Activated T-helper 1 cell treated with anti-CD3 and anti-CD28 coated beads, Interleukin-12 subunit alpha, Interleukin-12 subunit beta, Interleukin-2, Interleukin-4 antibody, amounts not matched to agents 30 ng/mL and 10 ng/mL and 1 ng/mL, durations not matched to agents 14 hours and 24 hours and 36 hours (primary cell): ENCODE measurements at regions of chr9 and their contacts with region 1.

Region 1: GRCh38 chr9:93003552-93004407 is 54.7 kb upstream of the SUSD3 start:
- DNase-seq: peak; percentile 51
- H3K4me3 Mint-ChIP-seq: no peak overlapping the region
- H3K27ac Mint-ChIP-seq: peak overlapping the region; percentile 63
- H3K4me1 Mint-ChIP-seq: peaks cover 38% of the 10 kb centered on the region
- H3K27me3 Mint-ChIP-seq: no peaks in the 10 kb centered on the region

Region 2: GRCh38 chr9:92747459-92748232 is 256.1 kb before region 1 on chr9:
- intact Hi-C with region 1: no loop called
- DNase-seq: no peak
- H3K4me3 Mint-ChIP-seq: no peak overlapping the region
- H3K27ac Mint-ChIP-seq: no peak overlapping the region
- H3K4me1 Mint-ChIP-seq: peaks cover 31% of the 10 kb centered on the region
- H3K27me3 Mint-ChIP-seq: no peaks in the 10 kb centered on the region

Region 3: GRCh38 chr9:92954049-92954861 is 49.5 kb before region 1 on chr9:
- intact Hi-C with region 1: loop called (anchors 1 kb)
- DNase-seq: peak; percentile 73
- H3K4me3 Mint-ChIP-seq: peak overlapping the region; percentile 49
- H3K27ac Mint-ChIP-seq: peak overlapping the region; percentile 88
- H3K4me1 Mint-ChIP-seq: peaks cover 56% of the 10 kb centered on the region
- H3K27me3 Mint-ChIP-seq: peaks cover 4% of the 10 kb centered on the region

Region 4: DNA sequence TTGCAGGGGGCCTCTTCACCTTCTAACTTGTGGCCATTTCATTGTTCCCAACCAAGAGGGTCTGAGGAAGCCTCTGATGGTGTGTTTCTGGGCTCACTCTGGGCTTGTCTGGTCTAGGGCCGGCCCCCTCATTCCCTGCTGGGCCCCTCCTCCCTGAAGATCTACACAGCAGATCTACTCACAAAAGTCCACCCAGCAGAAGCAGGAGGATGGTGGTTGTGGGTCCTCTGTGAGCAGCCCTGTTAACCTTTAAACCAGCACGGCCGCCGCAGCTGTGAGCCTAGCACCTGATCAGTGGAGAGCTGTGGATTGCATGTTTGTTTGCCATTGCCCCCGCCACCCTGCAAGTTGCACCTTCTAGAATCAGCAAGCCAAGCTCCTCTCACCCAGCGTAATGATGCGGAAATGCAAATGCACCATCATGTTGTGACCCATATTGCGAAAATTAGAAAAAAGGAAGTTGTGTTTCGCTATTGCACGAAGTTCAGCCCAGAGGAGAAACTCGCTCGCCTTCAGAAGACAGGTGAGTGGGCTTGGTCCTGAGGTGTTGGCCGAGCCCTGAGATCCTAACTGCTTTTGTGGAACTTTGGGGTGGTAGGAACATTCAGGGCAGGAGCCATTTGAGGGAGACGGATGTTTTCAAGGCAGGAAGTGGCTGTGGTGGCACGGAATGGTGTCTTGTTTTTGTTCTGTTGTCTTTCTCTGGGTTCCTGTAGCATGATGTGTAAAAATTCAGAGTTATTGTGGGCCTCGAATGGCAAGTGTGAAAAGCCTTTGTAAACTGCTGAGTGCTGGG is 39.8 kb before region 1 on chr9:
- intact Hi-C with region 1: loop called (anchors 2 kb)
- DNase-seq: peak; percentile 77
- H3K4me3 Mint-ChIP-seq: peak overlapping the region; percentile 98
- H3K27ac Mint-ChIP-seq: peak overlapping the region; percentile 97
- H3K4me1 Mint-ChIP-seq: peaks cover 69% of the 10 kb centered on the region
- H3K27me3 Mint-ChIP-seq: no peaks in the 10 kb centered on the region

Region 5: GRCh38 chr9:92977026-92977678 is 26.6 kb before region 1 on chr9:
- intact Hi-C with region 1: no loop called
- DNase-seq: no peak
- H3K4me3 Mint-ChIP-seq: no peak overlapping the region
- H3K27ac Mint-ChIP-seq: peak overlapping the region; percentile 45
- H3K4me1 Mint-ChIP-seq: peaks cover 72% of the 10 kb centered on the region
- H3K27me3 Mint-ChIP-seq: no peaks in the 10 kb centered on the region

Region 6: GRCh38 chr9:92988215-92988819 is 15.5 kb before region 1 on chr9:
- intact Hi-C with region 1: loop called (anchors 2 kb)
- DNase-seq: no peak
- H3K4me3 Mint-ChIP-seq: peak overlapping the region; percentile 12
- H3K27ac Mint-ChIP-seq: peak overlapping the region; percentile 73
- H3K4me1 Mint-ChIP-seq: peaks cover 74% of the 10 kb centered on the region
- H3K27me3 Mint-ChIP-seq: no peaks in the 10 kb centered on the region

Region 7: GRCh38 chr9:93041108-93041802 is 37.5 kb after region 1 on chr9:
- intact Hi-C with region 1: loop called (anchors 5 kb)
- DNase-seq: no peak
- H3K4me3 Mint-ChIP-seq: no peak overlapping the region
- H3K27ac Mint-ChIP-seq: peak overlapping the region; percentile 37
- H3K4me1 Mint-ChIP-seq: peaks cover 26% of the 10 kb centered on the region
- H3K27me3 Mint-ChIP-seq: peaks cover 2% of the 10 kb centered on the region

Region 8: GRCh38 chr9:93302551-93303257 is 298.9 kb after region 1 on chr9:
- intact Hi-C with region 1: loop called (anchors 10 kb)
- DNase-seq: peak; percentile 36
- H3K4me3 Mint-ChIP-seq: no peak overlapping the region
- H3K27ac Mint-ChIP-seq: no peak overlapping the region
- H3K4me1 Mint-ChIP-seq: peaks cover 9% of the 10 kb centered on the region
- H3K27me3 Mint-ChIP-seq: no peaks in the 10 kb centered on the region